ENCODE measurements at regions of chr6 and their contacts with region 1.

Region 1: GRCh38 chr6:73739096-73739495 is 43.1 kb downstream of the CD109 start:
- DNase-seq: no peak
- H3K4me3 ChIP-seq: no peak overlapping the region
- H3K27ac ChIP-seq: no peak overlapping the region
- H3K4me1 ChIP-seq: peaks cover 0 to 16% (median 12%) of the 10 kb centered on the region in 4 donors
- H3K27me3 ChIP-seq: no peaks in the 10 kb centered on the region
- CTCF ChIP-seq: peak; percentile 77 to 85 (median 80)
- EP300 ChIP-seq: no peak
- POLR2A ChIP-seq: no peak

Region 2: GRCh38 chr6:73528897-73529296 is 210.2 kb before region 1 on chr6:
- intact Hi-C with region 1: no loop called
- DNase-seq: no peak
- H3K4me3 ChIP-seq: no peak overlapping the region
- H3K27ac ChIP-seq: no peak overlapping the region
- H3K4me1 ChIP-seq: peaks cover 0 to 5% (median 2%) of the 10 kb centered on the region in 4 donors
- H3K27me3 ChIP-seq: no peaks in the 10 kb centered on the region
- CTCF ChIP-seq: no peak
- EP300 ChIP-seq: no peak
- POLR2A ChIP-seq: no peak

Region 3: GRCh38 chr6:73631849-73632248 is 107.2 kb before region 1 on chr6:
- intact Hi-C with region 1: no loop called
- DNase-seq: no peak
- H3K4me3 ChIP-seq: no peak overlapping the region
- H3K27ac ChIP-seq: no peak overlapping the region
- H3K4me1 ChIP-seq: no peaks in the 10 kb centered on the region
- H3K27me3 ChIP-seq: no peaks in the 10 kb centered on the region
- CTCF ChIP-seq: no peak
- EP300 ChIP-seq: no peak
- POLR2A ChIP-seq: no peak

Region 4: GRCh38 chr6:73854998-73855718 is 116.1 kb after region 1 on chr6:
- intact Hi-C with region 1: loop called (anchors 5 kb)
- DNase-seq: no peak
- H3K4me3 ChIP-seq: peak overlapping the region; percentile 20 to 40 (median 27)
- H3K27ac ChIP-seq: peak overlapping the region; percentile 4 to 59 (median 46)
- H3K4me1 ChIP-seq: peaks cover 0 to 18% (median 12%) of the 10 kb centered on the region in 4 donors
- H3K27me3 ChIP-seq: no peaks in the 10 kb centered on the region
- CTCF ChIP-seq: peak; percentile 68 to 88 (median 85)
- EP300 ChIP-seq: no peak
- POLR2A ChIP-seq: no peak

Region 5: GRCh38 chr6:74320074-74320473 is 581.0 kb after region 1 on chr6:
- intact Hi-C with region 1: no loop called
- DNase-seq: no peak
- H3K4me3 ChIP-seq: no peak overlapping the region
- H3K27ac ChIP-seq: no peak overlapping the region
- H3K4me1 ChIP-seq: no peaks in the 10 kb centered on the region
- H3K27me3 ChIP-seq: no peaks in the 10 kb centered on the region
- CTCF ChIP-seq: no peak
- EP300 ChIP-seq: no peak
- POLR2A ChIP-seq: no peak